Mammary epithelial cell (primary cell): ENCODE measurements at regions of chr17 and their contacts with region 1.

Region 1: DNA sequence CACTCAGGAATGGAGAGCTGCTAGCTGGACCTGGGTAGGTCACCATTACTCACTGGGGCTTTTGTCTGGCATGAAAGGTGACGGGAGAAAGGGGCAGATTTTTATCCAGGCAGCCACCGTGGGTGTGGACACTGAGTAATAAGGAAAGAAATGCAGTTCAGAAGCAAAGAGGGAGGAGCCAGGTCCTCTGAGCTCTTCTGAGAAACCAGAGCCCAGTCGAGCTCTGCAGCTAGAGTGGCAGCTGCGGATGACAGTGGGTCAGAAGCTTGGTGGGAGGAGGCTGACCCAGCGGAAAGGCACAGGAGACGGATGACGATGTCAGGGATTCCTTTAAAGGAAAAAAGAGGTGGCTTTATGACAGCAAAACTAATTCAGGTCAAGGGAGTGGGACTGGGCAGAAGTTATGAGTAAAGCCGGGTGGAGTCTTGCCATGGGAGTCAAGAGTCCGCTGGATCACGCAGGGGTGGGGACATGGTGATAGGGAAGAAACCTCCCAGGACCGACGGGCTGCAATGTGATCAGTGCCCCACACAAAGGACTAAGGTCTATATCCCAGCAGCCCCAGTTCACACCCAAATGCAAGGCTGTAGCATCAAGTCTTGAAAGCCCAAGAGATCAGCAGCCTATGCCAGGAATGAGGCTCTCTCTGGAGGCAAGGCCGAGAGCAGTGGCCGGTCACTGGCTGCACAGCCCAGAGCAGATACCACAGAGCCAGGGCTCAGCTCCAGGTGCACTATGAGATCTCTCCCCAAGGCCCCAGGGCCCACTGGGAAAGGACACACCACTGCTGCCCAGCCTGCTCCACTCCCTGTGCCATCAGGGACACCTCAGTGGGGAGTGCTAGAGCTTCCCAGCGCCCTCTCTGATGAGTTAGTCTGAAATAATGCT is 6.3 kb upstream of the MNT start:
- DNase-seq: peak; percentile 98
- H3K4me3 ChIP-seq: peak overlapping the region in 1 of 3 experiments; percentile 5
- H3K27ac ChIP-seq: peak overlapping the region; percentile 100
- H3K4me1 ChIP-seq: peaks cover 48% of the 10 kb centered on the region
- H3K27me3 ChIP-seq: no peaks in the 10 kb centered on the region
- CTCF ChIP-seq: no peak

Region 2: GRCh38 chr17:2392252-2393173 is 14.6 kb before region 1 on chr17:
- CTCF ChIA-PET with region 1: interaction called, 3 read pairs
- dilution Hi-C with region 1: no loop called
- in situ Hi-C with region 1: no loop called
- intact Hi-C with region 1: loop called (anchors 2 kb)
- DNase-seq: peak; percentile 92
- H3K4me3 ChIP-seq: peak overlapping the region; percentile 29 to 64 (median 56)
- H3K27ac ChIP-seq: peak overlapping the region; percentile 94
- H3K4me1 ChIP-seq: peaks cover 45% of the 10 kb centered on the region
- H3K27me3 ChIP-seq: no peaks in the 10 kb centered on the region
- CTCF ChIP-seq: no peak